CD8-positive, alpha-beta memory T cell (primary cell): ENCODE measurements at regions of chr2 and their contacts with region 1.

Region 1: GRCh38 chr2:159921752-159922404 is 123.9 kb upstream of the CD302 start:
- DNase-seq: peak; percentile 51 to 79 (median 56)
- H3K4me3 ChIP-seq: no peak overlapping the region
- H3K4me3 Mint-ChIP-seq: no peak overlapping the region
- H3K27ac ChIP-seq: no peak overlapping the region
- H3K27ac Mint-ChIP-seq: no peak overlapping the region
- H3K4me1 ChIP-seq: no peaks in the 10 kb centered on the region
- H3K4me1 Mint-ChIP-seq: peaks cover 0 to 8% (median 6%) of the 10 kb centered on the region in 3 donors
- H3K27me3 ChIP-seq: no peaks in the 10 kb centered on the region
- H3K27me3 Mint-ChIP-seq: peaks cover 6 to 20% of the 10 kb centered on the region in 2 donors

Region 2: DNA sequence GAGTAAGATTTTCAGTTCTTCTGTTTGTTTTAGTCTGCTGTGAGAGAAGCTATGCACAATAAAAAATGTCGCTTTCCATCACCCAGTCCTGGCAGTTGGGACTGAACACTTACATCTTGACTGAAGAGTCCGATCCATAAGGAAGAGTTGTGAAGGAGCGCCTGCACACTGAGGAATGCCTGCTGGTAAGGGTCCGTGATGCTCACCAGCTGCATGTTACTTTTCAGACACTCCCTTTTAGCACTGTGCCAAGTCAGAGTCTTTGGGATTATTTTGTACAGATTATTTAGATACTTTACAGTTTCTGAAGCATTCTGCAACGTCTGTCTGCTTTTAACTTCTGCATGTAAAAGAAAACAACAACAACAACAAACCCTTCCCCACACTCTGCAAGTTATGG is 81.3 kb before region 1 on chr2:
- CTCF ChIA-PET with region 1: no interaction called
- POLR2A ChIA-PET with region 1: no interaction called
- DNase-seq: no peak
- H3K4me3 ChIP-seq: no peak overlapping the region
- H3K4me3 Mint-ChIP-seq: no peak overlapping the region
- H3K27ac ChIP-seq: no peak overlapping the region
- H3K27ac Mint-ChIP-seq: no peak overlapping the region
- H3K4me1 ChIP-seq: no peaks in the 10 kb centered on the region
- H3K4me1 Mint-ChIP-seq: no peaks in the 10 kb centered on the region
- H3K27me3 ChIP-seq: no peaks in the 10 kb centered on the region
- H3K27me3 Mint-ChIP-seq: no peaks in the 10 kb centered on the region

Region 3: GRCh38 chr2:159933040-159933726 is 11.3 kb after region 1 on chr2:
- CTCF ChIA-PET with region 1: interaction called, 12 read pairs
- POLR2A ChIA-PET with region 1: no interaction called
- DNase-seq: no peak
- H3K4me3 ChIP-seq: no peak overlapping the region
- H3K4me3 Mint-ChIP-seq: no peak overlapping the region
- H3K27ac ChIP-seq: no peak overlapping the region
- H3K27ac Mint-ChIP-seq: no peak overlapping the region
- H3K4me1 ChIP-seq: no peaks in the 10 kb centered on the region
- H3K4me1 Mint-ChIP-seq: no peaks in the 10 kb centered on the region
- H3K27me3 ChIP-seq: no peaks in the 10 kb centered on the region
- H3K27me3 Mint-ChIP-seq: peaks cover 2 to 12% of the 10 kb centered on the region in 2 donors

Region 4: GRCh38 chr2:160269803-160270570 is 348.1 kb after region 1 on chr2:
- CTCF ChIA-PET with region 1: no interaction called
- POLR2A ChIA-PET with region 1: no interaction called
- DNase-seq: peak; percentile 62 to 81 (median 66)
- H3K4me3 ChIP-seq: peak overlapping the region; percentile 46
- H3K4me3 Mint-ChIP-seq: peak overlapping the region; percentile 74 to 95 (median 87)
- H3K27ac ChIP-seq: peak overlapping the region; percentile 20
- H3K27ac Mint-ChIP-seq: peak overlapping the region; percentile 79 to 96 (median 92)
- H3K4me1 ChIP-seq: peaks cover 15% of the 10 kb centered on the region
- H3K4me1 Mint-ChIP-seq: peaks cover 27 to 46% (median 40%) of the 10 kb centered on the region in 3 donors
- H3K27me3 ChIP-seq: no peaks in the 10 kb centered on the region
- H3K27me3 Mint-ChIP-seq: peaks cover 0 to 1% of the 10 kb centered on the region in 2 donors